ENCODE measurements at regions of chr7 and their contacts with region 1.

Region 1: DNA sequence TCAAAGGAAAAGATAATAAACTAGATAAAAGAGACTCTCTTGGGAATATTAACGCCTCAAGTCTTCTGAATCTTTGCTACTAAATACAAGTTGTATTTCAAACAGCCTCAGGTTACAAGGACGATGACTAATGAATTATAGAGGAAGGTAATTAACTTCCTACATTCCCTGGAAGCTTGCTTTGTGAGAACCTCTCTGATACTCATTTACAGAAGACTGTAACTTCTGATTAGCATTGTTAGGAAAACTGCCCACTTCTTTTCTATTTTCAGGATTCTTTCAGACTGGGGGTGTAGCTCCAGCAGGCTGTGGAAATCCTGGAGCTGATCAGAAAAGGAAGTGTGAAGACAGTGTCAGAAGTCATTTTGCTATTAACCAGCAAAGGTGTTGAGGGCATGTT is 316.7 kb upstream of the NPSR1 start:
- DNase-seq: no peak
- ATAC-seq: no peak
- H3K4me3 ChIP-seq: no peak overlapping the region
- H3K27ac ChIP-seq: no peak overlapping the region
- H3K4me1 ChIP-seq: no peaks in the 10 kb centered on the region
- H3K27me3 ChIP-seq: no peaks in the 10 kb centered on the region
- CTCF ChIP-seq: no peak

Region 2: DNA sequence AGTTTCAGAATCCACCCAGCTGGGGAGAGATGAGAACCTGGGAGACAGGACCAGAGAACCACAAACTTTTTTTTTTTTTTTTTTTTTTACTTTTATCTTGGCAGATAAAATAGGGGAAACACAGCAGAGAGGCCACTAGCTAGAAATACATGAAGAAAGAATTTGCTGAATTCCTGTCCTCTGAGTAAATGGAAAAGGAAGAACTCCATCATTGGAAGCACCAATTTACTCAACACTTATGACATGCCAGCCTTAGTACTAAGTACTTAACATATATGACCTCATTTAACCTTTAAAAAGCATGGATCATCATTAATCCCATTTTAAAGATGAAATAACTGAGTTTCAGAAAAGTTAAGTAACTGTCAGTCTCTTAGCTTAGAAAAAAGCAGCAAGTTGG is 26.3 kb before region 1 on chr7:
- CTCF ChIA-PET with region 1: no interaction called
- POLR2A ChIA-PET with region 1: interaction called, 24 read pairs
- intact Hi-C with region 1: no loop called
- DNase-seq: no peak
- ATAC-seq: no peak
- H3K4me3 ChIP-seq: no peak overlapping the region
- H3K27ac ChIP-seq: no peak overlapping the region
- H3K4me1 ChIP-seq: no peaks in the 10 kb centered on the region
- H3K27me3 ChIP-seq: no peaks in the 10 kb centered on the region
- CTCF ChIP-seq: no peak

Region 3: GRCh38 chr7:34612661-34613060 is 271.3 kb after region 1 on chr7:
- CTCF ChIA-PET with region 1: no interaction called
- POLR2A ChIA-PET with region 1: no interaction called
- intact Hi-C with region 1: no loop called
- DNase-seq: no peak
- ATAC-seq: no peak
- H3K4me3 ChIP-seq: no peak overlapping the region
- H3K27ac ChIP-seq: no peak overlapping the region
- H3K4me1 ChIP-seq: no peaks in the 10 kb centered on the region
- H3K27me3 ChIP-seq: no peaks in the 10 kb centered on the region
- CTCF ChIP-seq: no peak

Measured in PC-3 (cell line).